ENCODE measurements at regions of chr3 and their contacts with region 1.

Region 1: DNA sequence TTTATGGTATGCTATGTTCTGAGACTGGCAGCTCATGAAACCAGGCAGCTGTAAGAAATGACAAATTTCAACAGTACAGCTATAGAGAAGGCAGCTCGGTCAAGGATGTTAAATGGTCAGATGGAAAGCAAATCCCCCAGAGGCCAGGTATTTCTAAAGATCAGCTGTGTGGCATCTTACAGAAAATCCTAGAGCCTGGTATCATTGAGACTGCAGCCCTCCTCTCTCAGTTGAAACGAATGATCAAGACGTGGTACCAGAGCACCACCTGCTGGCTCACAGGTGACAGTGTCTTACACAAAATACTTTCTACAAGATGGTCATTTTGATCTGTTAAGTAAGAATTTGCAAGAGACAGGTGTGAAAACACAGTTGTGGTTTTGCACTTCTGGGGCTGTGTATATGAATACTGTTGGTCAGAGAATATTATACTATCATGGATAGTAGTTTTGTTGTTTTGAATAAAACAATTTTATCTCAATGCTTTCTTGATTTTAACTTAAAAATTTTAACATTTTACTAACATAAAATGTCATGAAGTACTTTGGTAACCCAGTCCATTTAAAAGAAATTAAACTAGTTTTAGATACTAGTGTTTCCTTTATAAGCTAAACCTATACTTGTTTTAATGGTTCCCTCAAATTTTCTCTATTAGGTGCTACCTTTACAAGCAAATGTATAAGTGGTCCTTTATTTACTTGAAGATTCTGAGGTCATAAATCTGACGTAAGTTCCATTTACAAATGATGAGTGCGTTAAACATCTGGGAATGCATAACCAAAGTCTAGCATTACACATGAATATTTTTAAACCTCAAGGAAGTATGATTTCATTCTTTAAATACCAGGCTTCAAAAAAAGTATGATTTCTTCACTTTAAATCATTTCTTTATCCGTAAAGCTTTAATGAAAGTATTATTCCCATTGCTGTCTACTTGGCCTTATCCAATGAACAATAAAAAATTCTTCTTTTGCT is 121.8 kb downstream of the PDZRN3 start:
- DNase-seq: peak; percentile 73
- H3K4me3 Mint-ChIP-seq: no peak overlapping the region
- H3K27ac Mint-ChIP-seq: no peak overlapping the region
- H3K4me1 Mint-ChIP-seq: no peaks in the 10 kb centered on the region
- H3K27me3 Mint-ChIP-seq: peaks cover 10% of the 10 kb centered on the region
- CTCF ChIP-seq: peak; percentile 69

Region 2: DNA sequence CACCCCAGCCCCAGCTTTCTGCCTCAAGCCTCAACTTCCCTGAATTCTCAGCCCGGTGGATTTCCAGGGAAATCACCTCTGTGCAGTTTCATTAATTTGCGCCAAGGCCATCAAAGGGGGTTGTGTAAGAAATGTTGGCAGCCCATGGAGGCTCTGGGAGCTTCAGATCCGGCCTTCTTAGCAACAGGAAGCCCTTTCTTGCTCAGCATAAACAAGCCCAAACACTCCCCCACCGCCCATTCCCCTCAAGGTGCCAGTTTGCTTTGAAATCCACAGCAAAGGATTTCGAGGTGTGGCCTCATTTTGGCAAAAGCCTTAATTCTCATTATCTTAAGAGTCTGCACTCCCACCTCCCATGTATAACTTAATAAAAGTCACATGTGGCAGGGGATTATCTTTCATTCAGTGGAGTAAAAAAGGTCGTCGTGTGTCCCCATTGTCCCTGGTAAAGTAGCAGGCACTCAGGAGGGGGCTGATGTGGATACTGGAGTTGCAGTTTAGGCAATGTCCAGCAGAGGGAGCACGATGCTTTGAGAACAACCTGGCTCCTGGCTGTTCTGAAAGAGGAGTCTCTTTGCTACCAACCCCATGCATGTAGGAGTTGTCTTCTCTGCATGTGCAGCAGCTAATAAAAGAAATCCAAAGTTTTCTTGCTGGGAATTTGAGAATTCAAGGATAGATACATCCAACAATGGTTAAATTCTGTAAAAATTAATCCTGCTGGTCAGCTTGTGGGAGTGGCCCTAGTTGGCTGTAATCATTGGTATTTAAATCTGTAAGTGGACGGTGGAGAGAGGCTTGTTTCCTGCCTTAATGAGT is 401.9 kb before region 1 on chr3:
- CTCF ChIA-PET with region 1: interaction called, 151 read pairs
- POLR2A ChIA-PET with region 1: interaction called, 3 read pairs
- intact Hi-C with region 1: loop called (anchors 1 kb)
- DNase-seq: peak; percentile 85
- H3K4me3 Mint-ChIP-seq: no peak overlapping the region
- H3K27ac Mint-ChIP-seq: no peak overlapping the region
- H3K4me1 Mint-ChIP-seq: no peaks in the 10 kb centered on the region
- H3K27me3 Mint-ChIP-seq: no peaks in the 10 kb centered on the region
- CTCF ChIP-seq: peak; percentile 88

Region 3: GRCh38 chr3:73413619-73414018 is 89.3 kb before region 1 on chr3:
- CTCF ChIA-PET with region 1: no interaction called
- POLR2A ChIA-PET with region 1: no interaction called
- intact Hi-C with region 1: no loop called
- DNase-seq: no peak
- H3K4me3 Mint-ChIP-seq: no peak overlapping the region
- H3K27ac Mint-ChIP-seq: no peak overlapping the region
- H3K4me1 Mint-ChIP-seq: no peaks in the 10 kb centered on the region
- H3K27me3 Mint-ChIP-seq: peaks cover 42% of the 10 kb centered on the region
- CTCF ChIP-seq: no peak

Region 4: DNA sequence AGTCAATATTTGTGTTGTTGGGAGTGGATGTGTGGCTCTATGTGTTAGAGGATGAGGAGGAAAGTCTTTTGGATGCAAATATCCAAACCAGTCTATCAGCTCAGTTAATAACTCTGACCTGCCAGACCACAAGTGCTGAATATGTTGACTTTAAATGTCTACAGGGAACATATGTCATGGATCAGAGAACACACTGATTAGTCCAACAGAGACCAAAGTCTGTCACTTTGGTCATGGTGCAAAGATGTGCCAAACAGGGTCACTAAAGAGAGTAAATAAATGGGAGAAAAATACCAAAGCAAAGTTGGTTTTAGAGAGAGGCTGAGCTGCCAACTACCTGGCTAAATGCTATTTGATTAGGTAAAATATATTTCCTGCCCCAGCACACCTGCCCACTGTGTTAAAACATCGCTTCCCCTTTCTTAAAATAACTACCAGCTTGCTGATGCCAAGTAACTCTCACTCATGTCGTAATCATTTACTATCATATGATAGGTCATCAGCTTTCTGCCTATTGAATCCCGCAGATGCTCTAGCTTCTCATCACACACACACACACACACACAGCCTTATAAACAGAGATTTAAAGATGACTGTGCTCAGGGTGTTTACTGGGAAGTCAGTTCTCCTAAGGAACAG is 51.5 kb before region 1 on chr3:
- CTCF ChIA-PET with region 1: interaction called, 30 read pairs
- POLR2A ChIA-PET with region 1: interaction called, 3 read pairs
- intact Hi-C with region 1: loop called (anchors 1 kb)
- DNase-seq: no peak
- H3K4me3 Mint-ChIP-seq: no peak overlapping the region
- H3K27ac Mint-ChIP-seq: no peak overlapping the region
- H3K4me1 Mint-ChIP-seq: no peaks in the 10 kb centered on the region
- H3K27me3 Mint-ChIP-seq: no peaks in the 10 kb centered on the region
- CTCF ChIP-seq: no peak

Region 5: GRCh38 chr3:73490453-73491286 is 12.2 kb before region 1 on chr3:
- CTCF ChIA-PET with region 1: interaction called, 42 read pairs
- POLR2A ChIA-PET with region 1: no interaction called
- intact Hi-C with region 1: no loop called
- DNase-seq: no peak
- H3K4me3 Mint-ChIP-seq: no peak overlapping the region
- H3K27ac Mint-ChIP-seq: no peak overlapping the region
- H3K4me1 Mint-ChIP-seq: peaks cover 4% of the 10 kb centered on the region
- H3K27me3 Mint-ChIP-seq: no peaks in the 10 kb centered on the region
- CTCF ChIP-seq: no peak

Region 6: GRCh38 chr3:73848173-73848906 is 345.4 kb after region 1 on chr3:
- CTCF ChIA-PET with region 1: interaction called, 200 read pairs
- POLR2A ChIA-PET with region 1: interaction called, 10 read pairs
- intact Hi-C with region 1: loop called (anchors 1 kb)
- DNase-seq: peak; percentile 22
- H3K4me3 Mint-ChIP-seq: no peak overlapping the region
- H3K27ac Mint-ChIP-seq: no peak overlapping the region
- H3K4me1 Mint-ChIP-seq: no peaks in the 10 kb centered on the region
- H3K27me3 Mint-ChIP-seq: peaks cover 25% of the 10 kb centered on the region
- CTCF ChIP-seq: peak; percentile 57